HEK293T (cell line): ENCODE measurements at regions of chr2 and their contacts with region 1.

Region 1: GRCh38 chr2:85728883-85729824 is 24.6 kb upstream of the ATOH8 start:
- DNase-seq: peak; percentile 93

Region 2: GRCh38 chr2:85694052-85695025 is 34.8 kb before region 1 on chr2 and contains the start of gene GNLY:
- CTCF ChIA-PET with region 1: interaction called, 10 read pairs
- POLR2A ChIA-PET with region 1: no interaction called
- DNase-seq: no peak

Region 3: DNA sequence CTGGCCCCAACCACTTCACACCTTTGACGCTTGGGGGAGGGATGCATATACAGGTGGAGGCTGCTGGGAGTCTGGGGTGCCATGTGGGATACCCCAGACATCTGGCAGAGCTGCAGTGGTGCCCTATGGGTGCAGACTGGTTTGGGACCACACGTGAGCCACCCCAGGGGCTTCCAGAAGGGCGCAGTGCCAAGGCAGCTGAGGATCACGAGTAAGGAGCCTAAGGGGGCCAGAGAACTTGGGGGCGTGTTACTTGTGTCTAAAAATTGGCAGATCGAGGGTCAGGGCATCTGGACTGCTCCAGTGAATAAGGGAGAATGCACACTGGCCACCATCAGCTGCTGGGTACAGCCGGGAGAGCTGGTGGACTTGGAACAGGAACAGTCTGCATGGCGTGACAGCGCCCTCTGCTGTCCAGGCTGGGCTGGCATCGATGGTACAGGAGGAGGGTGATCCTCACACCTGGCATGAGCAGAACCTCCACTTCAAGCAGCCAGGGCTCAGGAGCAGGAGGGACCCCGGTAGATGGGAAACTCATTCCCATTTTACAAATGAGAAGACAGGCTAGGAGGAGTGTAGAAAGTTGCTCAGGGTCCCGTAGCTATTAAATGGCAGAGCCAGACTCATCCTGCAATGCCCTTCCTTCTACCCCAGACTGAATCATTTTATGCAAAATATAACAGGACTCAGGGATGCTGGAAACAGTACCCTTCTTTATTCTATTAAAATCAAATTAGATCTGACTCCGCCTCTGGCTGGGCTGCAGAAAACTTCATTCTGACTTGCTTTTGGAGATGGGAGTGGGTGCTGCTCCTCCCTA is 85.0 kb after region 1 on chr2:
- CTCF ChIA-PET with region 1: interaction called, 19 read pairs
- POLR2A ChIA-PET with region 1: interaction called, 6 read pairs
- DNase-seq: peak; percentile 85